Prostate gland (tissue), 2 donors: ENCODE measurements at regions of chr1 and their contacts with region 1.

Region 1: GRCh38 chr1:193059268-193060225 is at the starts of genes RO60 and UCHL5:
- DNase-seq: peak; percentile 96
- H3K4me3 ChIP-seq: peak within 1 kb of the TSS; percentile 77 to 81
- H3K27ac ChIP-seq: peak within 1 kb of the TSS; percentile 95 to 98
- H3K4me1 ChIP-seq: no peaks in the 10 kb centered on the region
- H3K27me3 ChIP-seq: no peaks in the 10 kb centered on the region
- CTCF ChIP-seq: peak in 2 of 4 experiments; percentile 24 to 39
- POLR2A ChIP-seq: peak; percentile 81
- total RNA-seq, gene RO60: 92.8 to 93.8 TPM
- total RNA-seq, gene UCHL5: 28.7 to 36.9 TPM

Region 2: DNA sequence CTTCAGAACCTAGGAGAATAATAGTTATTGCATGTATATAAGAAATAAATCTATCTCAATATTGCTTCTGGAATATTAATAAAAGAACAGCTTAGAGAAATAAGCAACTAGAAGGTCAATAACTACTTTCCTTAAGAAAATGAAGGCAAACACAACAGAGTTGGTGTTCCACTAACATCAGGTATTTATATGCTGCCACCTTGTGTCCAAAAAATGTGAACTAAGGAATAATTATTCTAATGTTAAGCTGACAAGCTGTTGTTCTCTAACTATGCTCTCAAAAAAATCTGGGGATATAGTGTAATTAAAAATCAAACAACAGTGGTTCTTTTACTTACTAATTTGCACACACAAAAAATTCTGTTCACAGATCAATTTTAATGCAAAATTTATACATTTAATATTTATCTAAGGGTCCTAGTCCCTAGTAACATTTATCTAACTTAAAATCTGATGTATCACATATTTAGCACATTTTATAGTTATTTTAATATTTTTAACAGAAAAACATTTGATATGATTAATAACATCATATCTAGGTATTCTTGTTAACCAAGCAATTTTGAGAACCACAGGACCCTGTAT is 40.0 kb before region 1 on chr1:
- intact Hi-C with region 1: no loop called
- DNase-seq: peak; percentile 34
- H3K4me3 ChIP-seq: no peak overlapping the region
- H3K27ac ChIP-seq: no peak overlapping the region
- H3K4me1 ChIP-seq: no peaks in the 10 kb centered on the region
- H3K27me3 ChIP-seq: no peaks in the 10 kb centered on the region
- CTCF ChIP-seq: peak; percentile 29 to 78 (median 68)
- POLR2A ChIP-seq: no peak

Region 3: DNA sequence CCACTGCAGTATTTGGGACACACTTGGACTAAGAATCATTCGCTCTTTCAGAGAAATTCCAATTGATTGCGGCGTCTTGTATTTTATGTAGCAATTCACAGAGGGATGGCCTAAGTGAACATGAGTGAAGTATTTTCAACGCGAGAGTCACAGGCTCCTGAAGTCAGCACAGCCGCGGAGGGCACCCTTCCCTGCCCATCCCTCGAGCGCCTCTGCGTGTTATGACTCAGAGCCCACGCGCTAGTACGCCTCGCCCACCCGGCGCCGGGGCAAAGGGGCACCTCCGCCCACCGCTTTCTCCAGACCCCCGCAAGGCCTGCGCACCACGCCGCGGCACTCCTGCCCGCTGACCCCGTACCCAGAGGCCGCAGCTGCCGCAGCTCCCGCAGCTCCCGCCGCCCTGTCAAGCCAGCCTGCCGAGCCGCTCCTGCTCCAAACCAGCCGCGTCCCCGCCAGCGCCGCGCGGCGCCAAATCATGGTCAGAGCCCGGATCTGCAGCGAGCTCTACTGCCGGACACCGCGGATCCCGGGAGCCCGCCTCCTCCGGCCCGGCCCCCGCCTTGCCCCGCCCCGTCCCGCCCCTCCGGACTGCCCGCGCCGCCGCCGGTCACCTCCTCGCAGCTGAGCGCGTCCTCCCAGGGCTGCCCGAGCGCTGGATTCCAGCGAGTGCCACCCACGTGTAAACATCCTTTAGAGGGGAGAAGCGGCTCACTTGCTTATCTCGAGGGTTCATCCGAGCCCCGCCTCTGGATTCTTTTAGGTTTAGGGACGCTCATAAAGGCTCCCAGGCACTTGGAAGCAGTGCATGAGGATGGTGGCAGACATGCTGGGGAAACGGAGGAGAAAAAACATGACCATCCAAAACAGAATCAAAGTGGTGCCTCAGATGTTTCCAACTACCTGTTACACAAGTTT is 45.6 kb after region 1 on chr1 and contains the start of gene GLRX2:
- intact Hi-C with region 1: loop called (anchors 5 kb)
- DNase-seq: peak; percentile 88
- H3K4me3 ChIP-seq: peak within 1 kb of the TSS; percentile 90 to 94
- H3K27ac ChIP-seq: peak within 1 kb of the TSS; percentile 89 to 92
- H3K4me1 ChIP-seq: no peaks in the 10 kb centered on the region
- H3K27me3 ChIP-seq: no peaks in the 10 kb centered on the region
- CTCF ChIP-seq: peak in 1 of 4 experiments; percentile 15
- POLR2A ChIP-seq: peak; percentile 77
- total RNA-seq, gene GLRX2: 6.5 to 13.6 TPM